CD4-positive, alpha-beta T cell (primary cell): ENCODE measurements at regions of chr11 and their contacts with region 1.

Region 1: DNA sequence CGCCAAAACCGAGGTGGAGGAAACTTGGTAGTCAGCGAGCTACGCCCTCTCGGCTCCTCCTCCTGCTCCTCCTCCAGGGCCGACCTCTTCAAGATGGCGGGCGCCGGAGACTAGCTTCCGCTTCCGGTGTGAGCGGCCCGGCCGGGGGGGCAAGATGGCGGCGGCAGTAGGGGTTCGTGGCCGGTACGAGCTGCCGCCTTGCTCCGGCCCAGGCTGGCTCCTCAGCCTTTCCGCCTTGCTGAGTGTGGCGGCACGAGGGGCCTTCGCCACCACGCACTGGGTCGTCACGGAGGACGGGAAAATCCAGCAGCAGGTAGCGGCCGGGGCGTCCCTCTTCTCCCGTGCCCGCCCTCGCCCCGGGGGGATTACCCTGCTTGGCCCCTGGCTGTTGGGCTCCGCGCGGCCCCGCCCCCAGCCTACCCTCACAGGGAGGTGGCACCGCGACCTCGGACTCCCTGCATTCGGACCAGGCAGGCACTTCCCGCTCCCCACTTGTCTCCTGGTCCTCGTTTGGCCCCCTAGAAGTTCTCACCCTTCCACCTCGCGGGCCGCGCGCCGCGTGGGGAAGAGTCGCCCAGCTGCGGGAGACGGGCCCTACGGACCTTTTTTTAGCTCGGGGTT is at the start of gene TTC17:
- DNase-seq: peak; percentile 86 to 95 (median 90)
- ATAC-seq: peak; percentile 97
- H3K4me3 ChIP-seq: peak within 1 kb of the TSS; percentile 95
- H3K4me3 Mint-ChIP-seq: peak within 1 kb of the TSS; percentile 98
- H3K27ac ChIP-seq: peak within 1 kb of the TSS; percentile 83 to 95
- H3K27ac Mint-ChIP-seq: peak within 1 kb of the TSS; percentile 94
- H3K4me1 ChIP-seq: peaks cover 24% of the 10 kb centered on the region
- H3K4me1 Mint-ChIP-seq: peaks cover 61% of the 10 kb centered on the region
- H3K27me3 ChIP-seq: no peaks in the 10 kb centered on the region
- H3K27me3 Mint-ChIP-seq: no peaks in the 10 kb centered on the region
- CTCF ChIP-seq: no peak
- total RNA-seq, gene TTC17: 72.9 to 77.3 TPM

Region 2: DNA sequence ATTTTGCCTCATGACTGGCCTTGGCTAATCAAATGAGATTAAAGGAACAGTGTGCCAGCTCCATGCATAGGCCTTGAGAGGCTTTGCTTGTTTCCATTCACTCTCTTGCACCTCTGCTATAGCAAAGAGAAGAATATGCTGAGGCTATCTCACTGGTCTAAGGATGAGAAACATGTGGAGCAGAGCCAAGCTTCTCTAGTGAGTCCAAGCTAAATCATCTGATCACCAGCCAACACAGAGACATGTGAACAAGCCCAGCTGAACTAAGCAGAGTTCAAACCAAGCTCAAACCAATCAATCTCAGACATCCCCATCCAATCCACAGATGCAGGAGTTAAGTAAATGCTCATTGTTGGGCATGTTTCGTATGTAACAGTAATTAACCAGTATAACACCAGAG is 116.5 kb before region 1 on chr11:
- CTCF ChIA-PET with region 1: no interaction called
- POLR2A ChIA-PET with region 1: no interaction called
- intact Hi-C with region 1: no loop called
- DNase-seq: no peak
- ATAC-seq: no peak
- H3K4me3 ChIP-seq: no peak overlapping the region
- H3K4me3 Mint-ChIP-seq: no peak overlapping the region
- H3K27ac ChIP-seq: no peak overlapping the region
- H3K27ac Mint-ChIP-seq: no peak overlapping the region
- H3K4me1 ChIP-seq: no peaks in the 10 kb centered on the region
- H3K4me1 Mint-ChIP-seq: no peaks in the 10 kb centered on the region
- H3K27me3 ChIP-seq: peaks cover 0 to 6% of the 10 kb centered on the region in 2 experiments
- H3K27me3 Mint-ChIP-seq: peaks cover 16% of the 10 kb centered on the region
- CTCF ChIP-seq: no peak

Region 3: DNA sequence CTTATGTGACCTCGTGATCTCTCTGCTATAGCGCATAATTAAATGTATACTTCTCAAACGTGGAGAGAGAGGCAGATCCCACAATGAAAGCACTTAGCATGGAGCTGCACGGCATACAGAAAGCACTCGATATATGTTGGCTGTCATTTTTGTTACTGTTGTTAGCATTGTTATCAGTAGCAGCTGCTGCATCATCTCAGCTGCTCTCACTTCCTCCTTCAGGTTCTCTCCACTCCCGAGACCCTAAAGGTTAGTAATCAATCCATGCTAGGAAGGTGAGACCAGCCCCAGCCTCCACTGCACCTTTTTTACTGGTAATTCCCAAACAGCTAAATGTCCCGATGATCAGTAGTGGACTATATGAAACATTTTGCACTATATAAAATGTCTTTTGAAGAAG is 60.5 kb before region 1 on chr11:
- CTCF ChIA-PET with region 1: no interaction called
- POLR2A ChIA-PET with region 1: no interaction called
- intact Hi-C with region 1: no loop called
- DNase-seq: no peak
- ATAC-seq: no peak
- H3K4me3 ChIP-seq: no peak overlapping the region
- H3K4me3 Mint-ChIP-seq: no peak overlapping the region
- H3K27ac ChIP-seq: no peak overlapping the region
- H3K27ac Mint-ChIP-seq: no peak overlapping the region
- H3K4me1 ChIP-seq: no peaks in the 10 kb centered on the region
- H3K4me1 Mint-ChIP-seq: no peaks in the 10 kb centered on the region
- H3K27me3 ChIP-seq: peaks cover 4 to 5% of the 10 kb centered on the region in 2 experiments
- H3K27me3 Mint-ChIP-seq: peaks cover 51% of the 10 kb centered on the region
- CTCF ChIP-seq: no peak

Region 4: GRCh38 chr11:43376594-43376993 is 17.7 kb after region 1 on chr11:
- CTCF ChIA-PET with region 1: no interaction called
- POLR2A ChIA-PET with region 1: no interaction called
- intact Hi-C with region 1: no loop called
- DNase-seq: no peak
- ATAC-seq: no peak
- H3K4me3 ChIP-seq: no peak overlapping the region
- H3K4me3 Mint-ChIP-seq: no peak overlapping the region
- H3K27ac ChIP-seq: no peak overlapping the region
- H3K27ac Mint-ChIP-seq: no peak overlapping the region
- H3K4me1 ChIP-seq: no peaks in the 10 kb centered on the region
- H3K4me1 Mint-ChIP-seq: peaks cover 28% of the 10 kb centered on the region
- H3K27me3 ChIP-seq: no peaks in the 10 kb centered on the region
- H3K27me3 Mint-ChIP-seq: no peaks in the 10 kb centered on the region
- CTCF ChIP-seq: no peak

Region 5: DNA sequence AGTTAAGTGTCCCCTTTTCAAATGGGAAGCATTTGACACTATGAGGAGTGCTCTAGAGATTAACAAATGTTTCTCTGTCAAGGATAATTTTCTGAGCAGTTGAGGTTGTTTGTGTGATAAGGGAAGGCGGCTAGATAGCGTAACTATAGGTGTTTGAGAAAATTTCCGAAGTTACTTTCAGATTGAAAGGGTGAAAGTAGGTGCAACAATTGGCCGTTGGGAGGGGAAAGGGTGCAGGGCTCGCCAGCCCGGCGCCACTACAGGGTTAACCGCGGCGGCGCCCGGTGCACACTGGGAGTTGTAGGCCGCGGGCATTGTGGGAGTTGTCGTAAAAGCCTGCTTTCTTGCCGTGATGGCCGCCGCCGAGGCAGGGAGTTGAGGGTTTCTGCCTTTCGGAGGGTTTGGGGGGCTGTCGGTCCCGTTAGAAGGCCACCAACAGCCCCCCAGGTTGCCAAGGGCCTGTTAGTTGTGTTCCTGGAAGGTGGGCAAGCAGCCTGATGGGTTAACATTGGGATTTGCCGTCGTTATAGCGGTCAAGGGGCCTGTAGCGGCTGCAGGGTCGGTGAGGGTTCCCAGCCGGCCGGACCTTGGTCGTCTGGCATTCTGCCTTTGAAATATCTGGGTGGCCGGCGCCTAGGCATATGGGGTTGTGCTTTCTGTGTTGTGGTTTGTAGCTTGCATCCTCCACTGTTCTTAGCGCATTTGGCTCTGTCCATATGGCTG is 285.1 kb after region 1 on chr11:
- CTCF ChIA-PET with region 1: no interaction called
- POLR2A ChIA-PET with region 1: no interaction called
- intact Hi-C with region 1: loop called in 1 of 2 experiments (anchors 2 kb)
- DNase-seq: peak; percentile 73 to 91 (median 80)
- ATAC-seq: peak; percentile 99
- H3K4me3 ChIP-seq: peak overlapping the region; percentile 85
- H3K4me3 Mint-ChIP-seq: peak overlapping the region; percentile 91
- H3K27ac ChIP-seq: peak overlapping the region in 1 of 2 donors; percentile 23
- H3K27ac Mint-ChIP-seq: peak overlapping the region; percentile 82
- H3K4me1 ChIP-seq: peaks cover 9% of the 10 kb centered on the region
- H3K4me1 Mint-ChIP-seq: peaks cover 22% of the 10 kb centered on the region
- H3K27me3 ChIP-seq: peaks cover 10 to 13% of the 10 kb centered on the region in 2 experiments
- H3K27me3 Mint-ChIP-seq: peaks cover 18% of the 10 kb centered on the region
- CTCF ChIP-seq: no peak

Region 6: DNA sequence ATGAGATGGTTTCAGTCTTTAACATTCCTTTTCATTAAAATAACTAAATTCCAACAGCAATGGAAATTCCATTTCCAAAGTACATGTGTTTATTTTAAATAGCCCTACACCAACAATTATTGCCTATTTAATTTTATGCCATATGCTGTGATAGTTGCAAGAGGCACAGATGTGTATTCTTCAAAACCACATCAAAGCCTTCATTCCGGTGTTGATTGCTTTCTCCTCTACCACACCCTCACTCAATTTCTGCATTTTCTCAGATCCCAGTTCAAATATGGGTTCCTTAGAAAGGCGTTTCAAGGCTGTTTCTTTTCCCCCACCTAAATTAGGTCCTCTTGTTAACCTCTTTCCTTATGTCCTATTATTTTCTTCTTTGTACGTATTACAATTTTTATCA is 315.6 kb after region 1 on chr11:
- CTCF ChIA-PET with region 1: no interaction called
- POLR2A ChIA-PET with region 1: no interaction called
- intact Hi-C with region 1: loop called in 1 of 2 experiments (anchors 10 kb)
- DNase-seq: no peak
- ATAC-seq: no peak
- H3K4me3 ChIP-seq: no peak overlapping the region
- H3K4me3 Mint-ChIP-seq: no peak overlapping the region
- H3K27ac ChIP-seq: no peak overlapping the region
- H3K27ac Mint-ChIP-seq: no peak overlapping the region
- H3K4me1 ChIP-seq: peaks cover 2% of the 10 kb centered on the region
- H3K4me1 Mint-ChIP-seq: no peaks in the 10 kb centered on the region
- H3K27me3 ChIP-seq: peaks cover 0 to 2% of the 10 kb centered on the region in 2 experiments
- H3K27me3 Mint-ChIP-seq: peaks cover 15% of the 10 kb centered on the region
- CTCF ChIP-seq: no peak

Region 7: GRCh38 chr11:43680521-43681400 is 321.9 kb after region 1 on chr11 and contains the start of gene HSD17B12:
- CTCF ChIA-PET with region 1: no interaction called
- POLR2A ChIA-PET with region 1: interaction called, 24 read pairs
- intact Hi-C with region 1: loop called in 1 of 2 experiments (anchors 10 kb)
- DNase-seq: peak; percentile 95 to 99 (median 98)
- ATAC-seq: peak; percentile 92
- H3K4me3 ChIP-seq: peak within 1 kb of the TSS; percentile 91
- H3K4me3 Mint-ChIP-seq: peak within 1 kb of the TSS; percentile 96
- H3K27ac ChIP-seq: peak within 1 kb of the TSS; percentile 67 to 93
- H3K27ac Mint-ChIP-seq: peak within 1 kb of the TSS; percentile 96
- H3K4me1 ChIP-seq: peaks cover 18% of the 10 kb centered on the region
- H3K4me1 Mint-ChIP-seq: peaks cover 48% of the 10 kb centered on the region
- H3K27me3 ChIP-seq: no peaks in the 10 kb centered on the region
- H3K27me3 Mint-ChIP-seq: no peaks in the 10 kb centered on the region
- CTCF ChIP-seq: no peak
- total RNA-seq, gene HSD17B12: 16.1 to 16.3 TPM

Region 8: DNA sequence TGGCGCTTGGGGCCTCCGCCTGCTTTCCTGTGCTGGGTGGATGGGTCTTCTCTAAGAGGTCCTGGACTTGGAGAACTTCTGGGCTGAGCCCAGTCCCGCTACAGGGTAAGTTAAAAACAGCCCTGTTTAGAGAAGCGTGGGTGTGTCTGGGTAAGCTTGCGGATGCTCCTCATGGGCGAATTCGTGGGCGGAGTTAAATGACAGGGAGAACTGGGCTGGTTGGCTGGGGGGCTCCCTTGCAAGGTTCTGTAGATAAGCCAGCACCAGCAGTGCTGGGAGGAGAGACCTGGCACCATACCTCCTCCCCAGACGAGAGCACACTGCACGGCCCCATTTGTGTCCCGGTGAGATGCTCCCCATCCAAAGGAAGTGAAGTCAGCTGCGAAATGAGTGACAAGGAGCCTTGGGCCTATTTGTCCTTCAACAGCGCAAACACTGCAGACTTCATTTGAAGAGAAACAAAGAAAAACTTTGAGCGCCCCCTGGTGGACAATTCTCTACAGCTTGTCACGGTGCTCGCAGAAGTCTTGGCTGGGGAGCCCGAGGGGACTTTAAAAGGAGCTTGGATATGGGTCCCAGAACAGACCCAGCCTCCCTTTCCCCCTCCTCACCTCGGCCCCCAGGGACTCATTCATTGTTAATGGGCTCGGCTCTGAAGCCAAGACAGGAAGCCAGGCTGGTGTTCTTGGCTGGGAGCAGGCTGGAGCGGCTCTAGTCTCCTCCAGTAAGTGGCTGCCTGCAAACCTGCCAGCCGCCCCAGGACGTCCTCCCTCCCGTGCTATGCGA is 1552.3 kb after region 1 on chr11:
- CTCF ChIA-PET with region 1: no interaction called
- POLR2A ChIA-PET with region 1: no interaction called
- intact Hi-C with region 1: no loop called
- DNase-seq: peak; percentile 60 to 93 (median 82)
- ATAC-seq: peak; percentile 83
- H3K4me3 ChIP-seq: no peak overlapping the region
- H3K4me3 Mint-ChIP-seq: no peak overlapping the region
- H3K27ac ChIP-seq: no peak overlapping the region
- H3K27ac Mint-ChIP-seq: no peak overlapping the region
- H3K4me1 ChIP-seq: peaks cover 9% of the 10 kb centered on the region
- H3K4me1 Mint-ChIP-seq: peaks cover 7% of the 10 kb centered on the region
- H3K27me3 ChIP-seq: no peaks in the 10 kb centered on the region
- H3K27me3 Mint-ChIP-seq: no peaks in the 10 kb centered on the region
- CTCF ChIP-seq: peak; percentile 77

Region 9: GRCh38 chr11:45354976-45355705 is 1996.2 kb after region 1 on chr11:
- CTCF ChIA-PET with region 1: no interaction called
- POLR2A ChIA-PET with region 1: no interaction called
- intact Hi-C with region 1: loop called in 1 of 2 experiments (anchors 5 kb)
- DNase-seq: peak; percentile 82 to 95 (median 90)
- ATAC-seq: peak; percentile 92
- H3K4me3 ChIP-seq: peak overlapping the region; percentile 79
- H3K4me3 Mint-ChIP-seq: peak overlapping the region; percentile 84
- H3K27ac ChIP-seq: peak overlapping the region; percentile 43 to 52
- H3K27ac Mint-ChIP-seq: peak overlapping the region; percentile 57
- H3K4me1 ChIP-seq: peaks cover 17% of the 10 kb centered on the region
- H3K4me1 Mint-ChIP-seq: peaks cover 22% of the 10 kb centered on the region
- H3K27me3 ChIP-seq: no peaks in the 10 kb centered on the region
- H3K27me3 Mint-ChIP-seq: peaks cover 9% of the 10 kb centered on the region
- CTCF ChIP-seq: no peak